Prostate gland (tissue), 2 donors: ENCODE measurements at regions of chr1 and their contacts with region 1.

Region 1: DNA sequence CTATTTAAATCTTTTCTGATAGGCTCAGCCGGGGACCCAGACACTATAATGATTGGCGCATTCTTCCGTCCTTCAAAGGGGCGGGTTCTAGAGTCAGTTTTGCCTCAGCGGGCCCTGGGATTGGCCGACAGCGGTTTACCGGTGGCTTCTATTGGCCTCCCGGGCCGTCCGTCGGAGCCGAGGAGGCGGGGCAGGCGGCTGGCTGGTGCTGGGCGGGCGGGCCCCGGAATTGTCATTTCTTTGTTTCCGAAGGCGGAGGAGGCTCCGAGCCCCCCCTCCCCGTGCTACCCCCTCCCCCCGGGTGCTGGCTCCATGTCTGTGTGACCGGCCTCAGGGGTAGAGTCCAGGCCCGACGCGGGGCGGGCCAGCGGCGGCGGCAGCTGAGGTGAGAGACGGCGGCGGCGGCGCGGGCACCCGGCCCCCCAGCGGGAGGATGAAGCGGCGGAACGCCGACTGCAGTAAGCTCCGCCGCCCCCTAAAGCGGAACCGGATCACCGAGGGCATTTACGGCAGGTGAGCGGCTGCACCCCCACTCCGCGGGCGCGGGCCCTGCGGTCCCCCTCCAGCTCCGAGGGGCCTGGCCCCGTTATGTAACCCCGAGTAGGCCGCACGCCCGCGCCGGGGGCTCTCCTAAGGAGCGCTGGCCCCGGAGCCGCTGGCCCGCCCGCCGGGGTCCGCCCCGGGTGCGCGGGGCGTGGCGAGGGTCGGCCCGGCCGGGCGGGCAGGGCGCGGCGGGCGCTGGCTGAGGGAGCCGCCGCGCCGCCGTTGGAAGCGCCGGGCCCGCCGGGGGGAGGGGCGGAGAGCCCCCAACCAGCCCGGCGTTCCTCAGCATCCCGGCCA is at the start of gene MACO1:
- DNase-seq: peak; percentile 99
- H3K4me3 ChIP-seq: peak within 1 kb of the TSS; percentile 87 to 93
- H3K27ac ChIP-seq: peak within 1 kb of the TSS; percentile 86 to 92
- H3K4me1 ChIP-seq: peaks cover 6% of the 10 kb centered on the region
- H3K27me3 ChIP-seq: no peaks in the 10 kb centered on the region
- CTCF ChIP-seq: no peak
- POLR2A ChIP-seq: peak; percentile 30
- total RNA-seq, gene MACO1: 25.5 to 31.0 TPM

Region 2: DNA sequence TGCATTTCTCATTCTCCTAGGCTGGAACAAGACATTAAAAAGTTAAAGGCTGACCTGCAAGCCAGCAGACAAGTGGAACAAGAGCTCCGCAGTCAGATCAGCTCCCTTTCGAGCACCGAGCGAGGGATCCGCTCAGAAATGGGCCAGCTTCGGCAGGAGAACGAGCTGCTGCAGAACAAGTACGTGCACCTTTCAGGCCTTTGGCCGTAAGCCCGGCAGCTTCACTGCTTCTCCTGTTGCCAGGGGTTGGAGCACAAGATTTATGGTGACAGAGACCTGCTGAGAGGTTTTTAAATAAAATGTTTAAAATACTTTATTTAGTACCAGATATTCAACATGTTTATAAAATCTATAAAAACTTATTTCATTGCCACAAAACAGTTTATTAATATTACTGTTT is 53.2 kb after region 1 on chr1:
- intact Hi-C with region 1: loop called (anchors 5 kb)
- DNase-seq: peak; percentile 88
- H3K4me3 ChIP-seq: no peak overlapping the region
- H3K27ac ChIP-seq: peak overlapping the region; percentile 44 to 50
- H3K4me1 ChIP-seq: peaks cover 7% of the 10 kb centered on the region
- H3K27me3 ChIP-seq: no peaks in the 10 kb centered on the region
- CTCF ChIP-seq: no peak
- POLR2A ChIP-seq: no peak

Region 3: DNA sequence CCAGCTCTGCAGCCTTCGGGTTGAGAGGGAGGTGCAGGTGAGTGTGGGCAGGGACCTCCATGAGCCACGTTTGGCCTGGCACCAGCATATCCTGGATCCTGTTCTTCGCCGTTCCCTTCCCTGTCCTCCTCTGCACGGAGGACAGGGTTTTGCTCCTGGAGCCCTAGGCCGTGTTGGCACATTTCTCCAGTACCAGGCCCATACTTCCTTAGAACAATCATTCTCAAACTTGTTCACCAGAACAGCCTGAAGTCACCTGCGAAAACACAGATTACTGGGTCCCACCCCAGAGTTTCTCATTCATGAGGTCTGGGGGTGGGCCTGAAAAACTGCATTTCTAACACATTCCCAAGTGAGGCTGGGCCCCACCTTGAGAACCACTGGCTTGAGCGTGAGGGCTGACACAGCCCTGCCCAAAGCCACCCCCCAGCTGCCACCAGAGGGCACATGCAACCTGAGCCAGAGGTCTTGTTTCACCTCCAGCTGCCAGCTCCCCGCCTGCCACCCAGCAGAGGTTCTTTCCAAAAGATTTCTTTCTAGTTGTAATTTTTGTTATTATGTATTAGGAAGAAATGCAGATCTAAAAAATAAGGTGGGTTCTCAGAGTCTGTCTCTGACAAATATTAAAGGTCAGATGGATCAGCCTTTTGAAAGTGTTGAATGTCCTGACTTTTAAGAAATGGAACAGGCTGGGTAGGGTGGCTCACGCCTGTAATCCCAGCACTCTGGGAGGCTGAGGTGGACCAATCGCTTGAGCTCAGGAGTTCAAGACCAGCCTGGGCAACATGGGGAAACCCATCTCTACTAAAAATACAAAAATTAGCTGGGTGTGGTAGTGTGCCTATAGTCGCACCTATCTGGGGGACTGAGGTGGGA is 72.9 kb after region 1 on chr1:
- intact Hi-C with region 1: no loop called
- DNase-seq: peak; percentile 37
- H3K4me3 ChIP-seq: no peak overlapping the region
- H3K27ac ChIP-seq: peak overlapping the region; percentile 4
- H3K4me1 ChIP-seq: peaks cover 6% of the 10 kb centered on the region
- H3K27me3 ChIP-seq: no peaks in the 10 kb centered on the region
- CTCF ChIP-seq: peak in 3 of 4 experiments; percentile 23 to 66 (median 45)
- POLR2A ChIP-seq: no peak